ENCODE measurements at regions of chr12 and their contacts with region 1.

Region 1: GRCh38 chr12:12696562-12697383 is 790 bp upstream of the GPR19 start:
- DNase-seq: peak; percentile 93
- H3K4me3 Mint-ChIP-seq: peak overlapping the region; percentile 97
- H3K27ac Mint-ChIP-seq: peak overlapping the region; percentile 98
- H3K4me1 Mint-ChIP-seq: peaks cover 38% of the 10 kb centered on the region
- H3K27me3 Mint-ChIP-seq: no peaks in the 10 kb centered on the region

Region 2: GRCh38 chr12:10721651-10722501 is 1974.9 kb before region 1 on chr12:
- CTCF ChIA-PET with region 1: no interaction called
- intact Hi-C with region 1: loop called (anchors 5 kb)
- DNase-seq: peak; percentile 77
- H3K4me3 Mint-ChIP-seq: peak overlapping the region; percentile 95
- H3K27ac Mint-ChIP-seq: peak overlapping the region; percentile 94
- H3K4me1 Mint-ChIP-seq: peaks cover 30% of the 10 kb centered on the region
- H3K27me3 Mint-ChIP-seq: peaks cover 31% of the 10 kb centered on the region

Region 3: GRCh38 chr12:12356886-12357718 is 339.7 kb before region 1 on chr12 and contains the start of gene BORCS5:
- CTCF ChIA-PET with region 1: interaction called, 4 read pairs
- intact Hi-C with region 1: loop called (anchors 1 kb)
- DNase-seq: peak; percentile 98
- H3K4me3 Mint-ChIP-seq: peak within 1 kb of the TSS; percentile 81
- H3K27ac Mint-ChIP-seq: peak within 1 kb of the TSS; percentile 90
- H3K4me1 Mint-ChIP-seq: peaks cover 41% of the 10 kb centered on the region
- H3K27me3 Mint-ChIP-seq: no peaks in the 10 kb centered on the region
- total RNA-seq, gene BORCS5: 31.2 to 35.6 TPM

Region 4: DNA sequence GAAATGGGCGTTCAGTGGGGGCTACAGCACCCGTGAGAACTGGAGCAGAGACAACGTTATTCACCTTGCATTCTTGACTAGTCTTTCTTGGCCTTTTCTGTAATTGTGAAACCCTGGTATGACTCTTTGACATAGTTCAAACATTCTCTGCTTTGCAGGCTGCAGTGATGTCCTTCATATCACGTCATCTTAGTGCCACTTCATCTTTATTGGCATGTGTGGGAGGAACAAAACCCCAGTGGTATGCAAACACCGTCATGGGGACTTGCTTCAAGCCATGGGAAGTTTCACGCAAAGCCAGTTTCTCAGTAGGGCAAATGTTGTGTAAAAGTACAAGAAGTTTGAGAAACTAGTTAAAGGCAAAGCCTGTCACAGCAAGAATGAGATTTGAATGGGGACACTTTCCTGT is 113.9 kb before region 1 on chr12:
- CTCF ChIA-PET with region 1: no interaction called
- intact Hi-C with region 1: loop called (anchors 1 kb)
- DNase-seq: peak; percentile 81
- H3K4me3 Mint-ChIP-seq: peak overlapping the region; percentile 26
- H3K27ac Mint-ChIP-seq: peak overlapping the region; percentile 89
- H3K4me1 Mint-ChIP-seq: peaks cover 44% of the 10 kb centered on the region
- H3K27me3 Mint-ChIP-seq: peaks cover under 1% of the 10 kb centered on the region

Region 5: GRCh38 chr12:12716793-12717585 is 20.2 kb after region 1 on chr12 and contains the start of gene CDKN1B:
- CTCF ChIA-PET with region 1: interaction called, 9 read pairs
- intact Hi-C with region 1: loop called (anchors 1 kb)
- DNase-seq: peak; percentile 90
- H3K4me3 Mint-ChIP-seq: peak within 1 kb of the TSS; percentile 98
- H3K27ac Mint-ChIP-seq: peak within 1 kb of the TSS; percentile 98
- H3K4me1 Mint-ChIP-seq: peaks cover 55% of the 10 kb centered on the region
- H3K27me3 Mint-ChIP-seq: no peaks in the 10 kb centered on the region
- total RNA-seq, gene CDKN1B: 35.9 to 39.1 TPM

Region 6: DNA sequence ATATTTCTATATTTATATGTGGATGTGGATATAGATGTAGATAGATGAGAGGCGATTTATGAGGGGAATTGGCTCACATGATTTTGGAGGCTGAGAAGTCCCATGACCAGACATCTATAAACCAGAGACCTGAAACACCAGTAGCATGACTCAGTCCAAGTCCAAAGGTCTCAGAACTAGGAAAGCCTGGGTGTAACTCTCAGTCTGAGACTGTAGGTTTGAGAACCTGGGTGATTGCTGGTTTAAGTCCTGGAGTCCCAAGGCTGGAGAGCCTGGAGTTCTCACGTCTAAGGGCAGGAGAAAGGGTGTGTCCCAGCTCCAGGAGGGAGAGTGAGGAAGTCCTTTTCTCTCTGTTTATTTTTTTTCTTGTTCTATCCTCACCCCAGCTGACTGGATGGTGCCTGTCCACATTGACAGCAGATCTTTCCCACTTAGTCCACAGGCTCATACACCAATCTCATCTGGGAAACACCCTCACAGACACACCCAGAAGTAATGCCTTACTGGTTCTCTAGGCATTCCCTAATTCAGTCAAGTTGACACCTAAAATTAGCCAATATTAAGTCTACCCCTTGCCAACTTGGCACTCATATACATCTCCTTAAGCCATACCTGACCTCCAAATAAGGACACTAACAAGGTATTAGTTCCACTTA is 545.2 kb after region 1 on chr12:
- CTCF ChIA-PET with region 1: no interaction called
- intact Hi-C with region 1: no loop called
- DNase-seq: no peak
- H3K4me3 Mint-ChIP-seq: no peak overlapping the region
- H3K27ac Mint-ChIP-seq: no peak overlapping the region
- H3K4me1 Mint-ChIP-seq: no peaks in the 10 kb centered on the region
- H3K27me3 Mint-ChIP-seq: peaks cover 2% of the 10 kb centered on the region

Region 7: GRCh38 chr12:13452955-13453570 is 756.3 kb after region 1 on chr12:
- CTCF ChIA-PET with region 1: no interaction called
- intact Hi-C with region 1: no loop called
- DNase-seq: no peak
- H3K4me3 Mint-ChIP-seq: no peak overlapping the region
- H3K27ac Mint-ChIP-seq: no peak overlapping the region
- H3K4me1 Mint-ChIP-seq: no peaks in the 10 kb centered on the region
- H3K27me3 Mint-ChIP-seq: peaks cover 5% of the 10 kb centered on the region

Measured in activated naive CD4-positive, alpha-beta T cell treated with anti-CD3 and anti-CD28 coated beads for 36 hours (primary cell).